Heart left ventricle (tissue), 16 donors: ENCODE measurements at regions of chr22 and their contacts with region 1.

Region 1: GRCh38 chr22:41091132-41092022 is 1.0 kb upstream of the EP300 start:
- DNase-seq: peak; percentile 99 to 100 (median 99)
- ATAC-seq: peak; percentile 96 to 99 (median 98)
- H3K4me3 ChIP-seq: peak overlapping the region; percentile 73 to 100 (median 86)
- H3K27ac ChIP-seq: peak overlapping the region; percentile 98 to 100 (median 100)
- H3K4me1 ChIP-seq: peaks cover 10 to 35% (median 27%) of the 10 kb centered on the region in 12 donors
- H3K27me3 ChIP-seq: no peaks in the 10 kb centered on the region
- CTCF ChIP-seq: no peak
- POLR2A ChIP-seq: peak; percentile 41 to 76

Region 2: GRCh38 chr22:40808018-40808841 is 283.1 kb before region 1 on chr22:
- intact Hi-C with region 1: no loop called
- DNase-seq: no peak
- ATAC-seq: no peak
- H3K4me3 ChIP-seq: no peak overlapping the region
- H3K27ac ChIP-seq: no peak overlapping the region
- H3K4me1 ChIP-seq: peaks cover 0 to 5% (median 0%) of the 10 kb centered on the region in 12 donors
- H3K27me3 ChIP-seq: no peaks in the 10 kb centered on the region
- CTCF ChIP-seq: no peak
- POLR2A ChIP-seq: no peak

Region 3: DNA sequence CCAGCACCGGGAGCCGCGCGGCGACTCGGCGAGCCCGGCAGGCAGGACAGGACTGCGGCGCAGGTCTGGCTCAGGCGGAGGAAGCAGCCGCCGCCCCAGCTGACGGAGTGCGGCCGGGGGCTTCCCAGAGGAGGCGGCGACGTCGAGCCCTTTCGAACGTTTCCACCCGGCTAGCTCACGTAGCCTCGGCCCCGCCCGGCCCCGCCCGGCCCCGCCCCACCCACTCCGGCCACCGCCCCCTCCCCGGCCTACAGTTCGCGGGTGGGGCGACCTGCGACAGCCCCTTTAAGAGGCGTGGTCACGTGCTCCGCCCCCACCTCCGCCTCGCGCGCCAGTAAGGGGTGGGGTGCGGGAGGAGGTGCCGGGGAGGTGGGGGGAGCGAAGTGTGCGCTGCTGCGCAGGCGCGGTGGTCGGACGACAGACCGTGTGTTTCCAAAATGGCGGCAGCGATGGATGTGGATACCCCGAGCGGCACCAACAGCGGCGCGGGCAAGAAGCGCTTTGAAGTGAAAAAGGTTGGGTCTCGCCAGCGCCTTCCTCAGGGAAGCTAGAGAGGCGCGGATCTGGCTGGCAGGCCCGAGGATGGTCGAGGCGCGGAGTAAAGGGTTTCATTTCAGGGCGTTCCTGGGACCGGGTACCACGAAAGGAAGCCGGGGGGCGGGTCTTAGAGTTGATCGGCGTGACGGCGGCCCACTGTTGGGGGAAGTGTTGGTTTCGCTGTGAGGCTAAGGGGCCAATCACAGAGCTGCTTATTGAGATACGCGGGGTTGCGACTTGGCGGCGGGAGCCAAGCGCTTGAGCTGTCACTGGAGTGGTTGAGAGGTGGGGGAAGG is 140.2 kb before region 1 on chr22 and contains the start of gene RBX1:
- intact Hi-C with region 1: loop called (anchors 1 to 5 kb)
- DNase-seq: peak; percentile 98 to 99 (median 99)
- ATAC-seq: peak; percentile 95 to 97 (median 96)
- H3K4me3 ChIP-seq: peak within 1 kb of the TSS; percentile 56 to 96 (median 84)
- H3K27ac ChIP-seq: peak within 1 kb of the TSS; percentile 81 to 99 (median 95)
- H3K4me1 ChIP-seq: peaks cover 0 to 37% (median 25%) of the 10 kb centered on the region in 12 donors
- H3K27me3 ChIP-seq: no peaks in the 10 kb centered on the region
- CTCF ChIP-seq: no peak
- POLR2A ChIP-seq: peak; percentile 42 to 80
- total RNA-seq, gene RBX1: 44.1 to 76.2 (median 59.9) TPM

Region 4: DNA sequence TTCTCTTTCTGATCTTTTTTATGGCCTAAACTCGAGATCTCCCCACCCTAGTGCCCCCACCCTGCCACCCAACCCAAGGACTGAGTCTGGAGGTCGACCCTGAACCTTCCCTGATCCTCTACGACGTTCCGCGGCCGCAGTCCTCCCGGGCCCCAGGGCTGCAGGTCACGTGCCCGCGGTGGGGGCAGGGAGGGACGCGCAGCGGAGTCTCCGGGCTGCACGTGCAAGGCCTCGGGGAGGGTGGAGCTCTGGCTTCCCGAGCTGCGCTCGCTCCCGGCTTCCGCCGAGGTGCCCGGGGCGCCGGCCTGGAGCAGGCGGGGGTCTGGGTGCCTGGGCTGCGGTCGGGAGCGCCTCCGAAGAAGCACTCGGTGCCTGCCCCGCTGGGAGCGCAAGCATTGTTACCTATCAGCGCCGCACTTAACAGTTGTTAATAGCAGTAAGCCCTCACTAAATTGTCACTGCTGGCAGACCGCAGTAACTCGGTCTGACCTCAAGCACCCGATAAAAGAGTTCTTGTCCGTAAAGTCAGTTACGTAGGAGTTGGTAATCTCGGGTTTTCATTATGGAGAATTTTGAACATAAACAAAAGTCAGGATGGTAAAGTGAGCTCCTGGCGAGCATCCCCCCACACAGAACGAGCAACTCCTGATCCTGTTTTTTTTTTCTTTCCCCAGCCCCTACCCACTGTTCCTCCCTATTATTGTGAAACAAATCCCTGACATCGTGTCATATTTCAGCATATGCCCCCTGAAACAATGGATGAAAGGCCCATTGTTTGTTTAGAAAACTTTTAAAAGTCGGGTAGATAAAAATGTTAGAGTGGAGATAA is 68.7 kb before region 1 on chr22:
- intact Hi-C with region 1: loop called in 9 of 10 experiments (anchors 1 to 5 kb)
- DNase-seq: peak; percentile 93 to 97 (median 95)
- ATAC-seq: peak; percentile 87 to 97 (median 96)
- H3K4me3 ChIP-seq: peak overlapping the region; percentile 53 to 93 (median 80)
- H3K27ac ChIP-seq: peak overlapping the region; percentile 90 to 99 (median 97)
- H3K4me1 ChIP-seq: peaks cover 0 to 25% (median 10%) of the 10 kb centered on the region in 12 donors
- H3K27me3 ChIP-seq: no peaks in the 10 kb centered on the region
- CTCF ChIP-seq: no peak
- POLR2A ChIP-seq: peak in 1 of 2 donors; percentile 51

Region 5: GRCh38 chr22:41048791-41049717 is 42.3 kb before region 1 on chr22:
- intact Hi-C with region 1: loop called in 1 of 10 experiments (anchors 2 kb)
- DNase-seq: peak; percentile 75 to 83 (median 77)
- ATAC-seq: peak; percentile 88 to 98 (median 94)
- H3K4me3 ChIP-seq: peak overlapping the region in 9 of 12 donors; percentile 25 to 48 (median 35)
- H3K27ac ChIP-seq: peak overlapping the region; percentile 23 to 76 (median 62)
- H3K4me1 ChIP-seq: peaks cover 0 to 23% (median 10%) of the 10 kb centered on the region in 12 donors
- H3K27me3 ChIP-seq: no peaks in the 10 kb centered on the region
- CTCF ChIP-seq: no peak
- POLR2A ChIP-seq: no peak

Region 6: DNA sequence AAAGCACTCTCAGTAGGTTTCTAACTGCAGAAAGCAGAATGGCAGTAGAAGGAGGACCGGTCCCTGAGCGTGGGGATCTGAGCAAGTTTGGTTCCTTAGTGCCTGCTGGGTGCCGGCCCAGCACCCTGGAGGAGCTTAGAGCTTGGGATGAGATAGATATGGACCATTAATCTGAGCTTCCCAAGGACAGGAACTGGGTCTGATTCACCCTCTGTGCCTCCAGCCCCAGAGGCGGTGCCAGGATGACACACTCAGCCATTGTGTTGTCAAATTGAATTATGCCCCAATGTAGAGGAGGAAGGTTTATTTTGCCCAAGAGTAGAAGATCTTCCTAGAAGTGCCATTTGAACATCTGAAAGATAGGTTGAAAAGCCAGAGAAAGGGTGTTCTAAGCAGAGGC is 214.3 kb after region 1 on chr22:
- intact Hi-C with region 1: no loop called
- DNase-seq: no peak
- ATAC-seq: no peak
- H3K4me3 ChIP-seq: no peak overlapping the region
- H3K27ac ChIP-seq: no peak overlapping the region
- H3K4me1 ChIP-seq: peaks cover 0 to 47% (median 27%) of the 10 kb centered on the region in 12 donors
- H3K27me3 ChIP-seq: no peaks in the 10 kb centered on the region
- CTCF ChIP-seq: no peak
- POLR2A ChIP-seq: no peak

Region 7: DNA sequence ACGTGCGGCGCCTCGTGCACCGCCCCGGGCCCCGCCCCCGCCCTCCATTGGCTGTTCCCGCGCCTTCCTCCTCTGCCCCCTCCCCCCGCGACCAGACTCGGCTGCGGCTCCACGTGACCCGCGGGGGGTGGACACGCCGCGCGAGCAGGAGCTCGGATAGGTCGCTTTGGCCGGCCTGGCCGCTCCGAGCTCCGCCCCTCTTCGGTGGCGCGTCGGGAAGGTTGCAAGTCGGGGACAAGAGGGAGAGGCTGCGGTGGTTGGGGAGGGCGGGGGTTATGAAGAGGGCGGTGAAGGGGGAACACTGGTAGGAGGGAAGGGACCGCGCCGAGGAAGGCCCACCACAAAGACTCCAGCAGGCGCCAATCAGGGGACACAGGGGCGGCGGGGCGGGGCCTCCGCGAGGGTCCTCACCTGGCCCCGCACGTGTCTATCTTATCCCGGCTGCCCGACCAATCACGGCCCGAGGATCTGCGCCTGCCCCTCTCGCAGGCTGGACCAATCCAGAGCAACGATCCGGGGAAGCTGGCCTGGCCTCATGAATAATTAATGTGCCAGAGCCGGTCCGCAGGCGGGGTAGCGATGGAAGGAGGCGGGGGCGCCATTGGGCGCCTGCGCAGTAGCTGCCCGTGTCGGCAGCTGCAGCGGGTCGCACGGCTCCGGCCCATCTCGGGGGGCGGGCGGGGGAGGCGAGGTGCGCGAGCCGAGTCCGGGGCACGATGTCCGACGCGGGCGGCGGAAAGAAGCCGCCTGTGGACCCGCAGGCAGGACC is 290.1 kb after region 1 on chr22 and contains the start of gene TEF:
- intact Hi-C with region 1: loop called in 1 of 10 experiments (anchors 5 kb)
- DNase-seq: peak; percentile 99
- ATAC-seq: peak; percentile 89 to 93 (median 91)
- H3K4me3 ChIP-seq: peak within 1 kb of the TSS; percentile 57 to 100 (median 89)
- H3K27ac ChIP-seq: peak within 1 kb of the TSS; percentile 88 to 100 (median 97)
- H3K4me1 ChIP-seq: peaks cover 0 to 36% (median 25%) of the 10 kb centered on the region in 12 donors
- H3K27me3 ChIP-seq: no peaks in the 10 kb centered on the region
- CTCF ChIP-seq: no peak
- POLR2A ChIP-seq: peak in 1 of 2 donors; percentile 51
- total RNA-seq, gene TEF: 7.2 to 35.3 (median 19.6) TPM